ENCODE measurements at regions of chr3 and their contacts with region 1.

Region 1: DNA sequence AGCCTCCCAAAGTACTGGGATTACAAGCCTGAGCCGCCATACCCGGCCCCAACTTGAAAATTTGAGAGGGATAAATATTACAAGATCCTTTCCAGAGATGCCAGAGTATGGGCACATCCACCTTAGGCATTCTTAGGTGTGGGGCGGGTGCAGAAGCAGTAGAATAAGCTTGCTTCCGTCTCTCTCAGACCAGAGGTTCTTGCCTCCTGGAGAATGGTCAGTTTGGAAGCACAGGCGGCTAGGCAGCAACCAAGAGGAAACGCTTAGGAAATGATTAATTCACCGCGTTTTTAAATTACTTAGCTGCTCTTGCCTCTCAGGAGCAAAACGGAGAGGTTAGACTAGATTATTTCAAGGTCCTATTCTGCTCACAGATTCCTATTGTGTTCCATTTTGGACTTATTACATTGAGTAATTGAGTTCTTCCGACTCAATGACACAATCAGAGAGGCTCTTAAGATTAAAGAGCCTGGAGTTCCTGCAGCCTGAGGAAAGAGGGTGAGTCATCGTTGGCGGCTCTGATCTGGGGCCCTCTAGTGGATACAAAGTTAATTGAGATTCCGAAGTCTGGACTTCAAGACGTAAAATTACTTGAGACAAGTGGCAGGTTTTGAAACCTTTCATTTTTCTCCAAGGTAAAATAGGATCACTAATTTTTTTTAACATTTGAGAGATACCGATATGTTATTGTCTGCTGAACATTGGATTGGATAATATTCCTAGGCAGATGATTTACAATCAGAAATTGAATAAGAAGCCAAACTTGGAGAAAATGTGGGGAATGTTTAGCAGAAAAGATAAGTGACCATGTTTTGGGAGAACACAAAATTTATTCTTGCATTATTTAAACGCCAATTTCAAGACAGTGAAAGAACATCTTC is 5.8 kb upstream of the TOPAZ1 start:
- DNase-seq: peak in 8 of 10 donors; percentile 31 to 61 (median 50)
- H3K4me3 ChIP-seq: peak overlapping the region in 11 of 59 donors; percentile 1 to 41 (median 8)
- H3K27ac ChIP-seq: no peak overlapping the region
- H3K27me3 ChIP-seq: peaks cover 0 to 7% (median 0%) of the 10 kb centered on the region in 45 donors
- CTCF ChIP-seq: peak; percentile 54 to 83 (median 73)

Region 2: GRCh38 chr3:43540624-43541023 is 695.2 kb before region 1 on chr3:
- intact Hi-C with region 1: loop called in 1 of 2 experiments (anchors 10 kb)
- DNase-seq: no peak
- H3K4me3 ChIP-seq: no peak overlapping the region
- H3K27ac ChIP-seq: no peak overlapping the region
- H3K27me3 ChIP-seq: no peaks in the 10 kb centered on the region
- CTCF ChIP-seq: no peak

Measured in dorsolateral prefrontal cortex (tissue), 120 donors.